GM13976 (cell line): ENCODE measurements at regions of chr1 and their contacts with region 1.

Region 1: GRCh38 chr1:40951943-40952743 is 27.4 kb upstream of the CTPS1 start:
- DNase-seq: peak; percentile 83
- CTCF ChIP-seq: peak; percentile 95

Region 2: DNA sequence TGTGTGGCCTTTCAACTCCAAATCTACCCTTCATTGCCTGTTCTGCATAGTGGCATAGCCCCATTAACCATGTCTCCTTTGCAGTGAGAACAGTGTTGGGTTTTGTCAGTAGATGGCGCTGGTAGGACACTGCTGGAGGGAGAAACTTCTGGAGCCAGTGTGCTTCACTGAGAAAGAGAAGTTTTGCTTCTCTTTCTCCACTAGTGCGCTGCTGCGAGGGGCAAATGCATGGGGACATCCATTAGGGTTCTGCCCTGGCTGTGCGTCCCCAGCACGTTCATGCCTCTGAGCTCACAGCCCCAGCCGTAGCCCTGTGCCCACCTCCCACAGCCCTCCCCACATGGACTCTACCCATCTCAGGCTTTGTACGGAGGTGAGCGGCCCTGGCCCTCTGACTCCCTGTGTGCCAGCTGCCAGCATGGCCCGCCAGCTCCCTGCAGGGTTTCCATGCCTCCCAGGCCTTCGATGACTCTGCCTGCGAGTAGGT is 339.8 kb before region 1 on chr1:
- in situ Hi-C with region 1: loop called (anchors 25 kb)
- DNase-seq: peak; percentile 86
- CTCF ChIP-seq: peak; percentile 94

Region 3: GRCh38 chr1:40709100-40709801 is 242.9 kb before region 1 on chr1:
- in situ Hi-C with region 1: no loop called
- DNase-seq: peak; percentile 78
- CTCF ChIP-seq: no peak

Region 4: DNA sequence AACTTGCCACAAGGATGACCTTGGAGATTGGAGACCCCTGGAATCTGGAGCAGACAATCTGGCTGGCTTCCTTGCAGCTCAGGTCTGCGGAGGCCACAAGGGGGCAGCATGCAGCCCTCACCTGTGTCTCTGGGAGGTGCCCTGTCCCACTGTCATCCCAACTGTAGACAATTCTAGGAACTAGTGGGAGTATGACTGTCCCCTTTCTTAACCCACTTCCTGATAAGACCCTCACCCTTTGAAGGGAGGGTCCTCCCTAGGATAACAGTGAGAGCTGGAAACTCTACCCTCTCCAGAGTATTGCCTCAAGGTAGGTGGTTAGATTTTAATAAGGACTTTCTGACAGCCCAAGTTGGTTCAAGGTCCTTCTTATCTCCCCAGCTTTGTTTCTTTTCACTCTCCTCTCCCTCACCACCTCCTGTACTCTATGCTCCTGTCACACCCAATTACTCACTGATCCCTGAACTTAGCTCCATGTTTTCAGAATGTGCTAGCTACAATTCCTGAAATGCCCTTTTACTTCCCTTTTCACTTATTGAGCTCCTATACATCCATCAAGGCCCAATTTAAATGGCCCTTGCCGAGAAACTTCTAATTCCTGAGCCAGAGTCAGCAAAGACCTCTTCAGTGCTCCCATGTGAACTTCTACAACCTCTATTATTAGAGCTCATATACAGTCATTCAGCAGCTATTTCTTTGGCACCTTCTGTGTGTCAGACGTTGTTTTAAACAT is 177.7 kb before region 1 on chr1:
- in situ Hi-C with region 1: loop called (anchors 10 kb)
- DNase-seq: peak; percentile 72
- CTCF ChIP-seq: peak; percentile 85

Region 5: GRCh38 chr1:40849801-40850592 is 102.1 kb before region 1 on chr1:
- in situ Hi-C with region 1: loop called (anchors 10 kb)
- DNase-seq: peak; percentile 81
- CTCF ChIP-seq: peak; percentile 94